HEK293 (cell line): ENCODE measurements at regions of chr6 and their contacts with region 1.

Region 1: DNA sequence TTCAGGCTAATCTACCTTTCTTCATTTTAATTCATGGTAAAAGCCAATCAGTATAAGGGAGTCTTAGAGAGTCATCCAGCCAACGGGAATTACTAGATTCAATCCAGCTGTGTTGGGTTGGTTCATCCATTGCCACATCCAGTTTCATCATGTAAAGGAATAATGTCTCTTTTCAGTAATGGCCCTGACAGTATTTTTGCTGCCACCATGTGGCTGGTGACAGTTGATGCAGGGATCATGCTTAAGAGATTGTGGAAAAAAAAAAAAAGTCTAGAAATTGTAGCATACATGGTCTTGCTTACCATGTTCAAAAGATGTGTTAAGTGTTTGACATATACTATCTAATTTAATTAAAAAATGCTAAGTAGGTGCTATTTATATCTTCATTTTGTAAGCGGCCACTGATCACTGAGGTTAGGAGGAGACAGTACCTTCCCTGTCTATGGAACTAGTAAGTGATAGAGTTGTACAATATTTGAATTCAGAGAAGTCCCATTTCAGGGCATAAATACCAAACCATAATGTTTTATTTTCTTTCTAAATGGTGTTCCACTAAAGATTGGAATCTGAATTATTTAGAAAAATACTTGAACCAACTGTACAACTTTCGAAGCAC is 135.9 kb downstream of the KHDRBS2 start:
- H3K4me3 ChIP-seq: no peak overlapping the region
- H3K27ac ChIP-seq: no peak overlapping the region
- H3K4me1 ChIP-seq: no peaks in the 10 kb centered on the region
- CTCF ChIP-seq: 0 out of 2 replicates have a peak, but pooled peaks have one; percentile 16

Region 2: GRCh38 chr6:61809004-61809595 is 341.1 kb before region 1 on chr6:
- CTCF ChIA-PET with region 1: interaction called, 19 read pairs
- POLR2A ChIA-PET with region 1: no interaction called
- H3K4me3 ChIP-seq: no peak overlapping the region
- H3K27ac ChIP-seq: no peak overlapping the region
- H3K4me1 ChIP-seq: no peaks in the 10 kb centered on the region
- CTCF ChIP-seq: no peak